Activated naive CD4-positive, alpha-beta T cell treated with anti-CD3 and anti-CD28 coated beads for 36 hours (primary cell): ENCODE measurements at regions of chr1 and their contacts with region 1.

Region 1: GRCh38 chr1:226407497-226408284 is at the start of gene PARP1:
- DNase-seq: peak; percentile 87
- H3K4me3 Mint-ChIP-seq: peak within 1 kb of the TSS; percentile 99
- H3K27ac Mint-ChIP-seq: peak within 1 kb of the TSS; percentile 98
- H3K4me1 Mint-ChIP-seq: peaks cover 39% of the 10 kb centered on the region
- H3K27me3 Mint-ChIP-seq: no peaks in the 10 kb centered on the region
- total RNA-seq, gene PARP1: 265 to 273 TPM

Region 2: GRCh38 chr1:225428068-225428880 is 979.4 kb before region 1 on chr1:
- CTCF ChIA-PET with region 1: no interaction called
- intact Hi-C with region 1: loop called (anchors 2 kb)
- DNase-seq: peak; percentile 94
- H3K4me3 Mint-ChIP-seq: peak overlapping the region; percentile 85
- H3K27ac Mint-ChIP-seq: peak overlapping the region; percentile 96
- H3K4me1 Mint-ChIP-seq: peaks cover 43% of the 10 kb centered on the region
- H3K27me3 Mint-ChIP-seq: no peaks in the 10 kb centered on the region

Region 3: GRCh38 chr1:225453797-225454648 is 953.7 kb before region 1 on chr1:
- CTCF ChIA-PET with region 1: no interaction called
- intact Hi-C with region 1: no loop called
- DNase-seq: peak; percentile 10
- H3K4me3 Mint-ChIP-seq: no peak overlapping the region
- H3K27ac Mint-ChIP-seq: peak overlapping the region; percentile 82
- H3K4me1 Mint-ChIP-seq: peaks cover 30% of the 10 kb centered on the region
- H3K27me3 Mint-ChIP-seq: no peaks in the 10 kb centered on the region

Region 4: GRCh38 chr1:226186124-226187018 is 221.3 kb before region 1 on chr1 and contains the start of gene ACBD3:
- CTCF ChIA-PET with region 1: no interaction called
- intact Hi-C with region 1: loop called (anchors 1 kb)
- DNase-seq: peak; percentile 91
- H3K4me3 Mint-ChIP-seq: peak within 1 kb of the TSS; percentile 89
- H3K27ac Mint-ChIP-seq: peak within 1 kb of the TSS; percentile 87
- H3K4me1 Mint-ChIP-seq: peaks cover 34% of the 10 kb centered on the region
- H3K27me3 Mint-ChIP-seq: no peaks in the 10 kb centered on the region
- total RNA-seq, gene ACBD3: 15.0 to 15.7 TPM

Region 5: GRCh38 chr1:226209307-226210059 is 198.2 kb before region 1 on chr1:
- CTCF ChIA-PET with region 1: no interaction called
- intact Hi-C with region 1: no loop called
- DNase-seq: no peak
- H3K4me3 Mint-ChIP-seq: no peak overlapping the region
- H3K27ac Mint-ChIP-seq: no peak overlapping the region
- H3K4me1 Mint-ChIP-seq: no peaks in the 10 kb centered on the region
- H3K27me3 Mint-ChIP-seq: no peaks in the 10 kb centered on the region

Region 6: GRCh38 chr1:226308723-226309315 is 98.9 kb before region 1 on chr1 and contains the start of gene LIN9:
- CTCF ChIA-PET with region 1: interaction called, 13 read pairs
- intact Hi-C with region 1: loop called (anchors 1 kb)
- DNase-seq: peak; percentile 96
- H3K4me3 Mint-ChIP-seq: peak within 1 kb of the TSS; percentile 91
- H3K27ac Mint-ChIP-seq: peak within 1 kb of the TSS; percentile 82
- H3K4me1 Mint-ChIP-seq: peaks cover 16% of the 10 kb centered on the region
- H3K27me3 Mint-ChIP-seq: peaks cover 16% of the 10 kb centered on the region
- total RNA-seq, gene LIN9: 7.7 to 9.5 TPM

Region 7: GRCh38 chr1:226444901-226445300 is 37.2 kb after region 1 on chr1:
- CTCF ChIA-PET with region 1: interaction called, 3 read pairs
- intact Hi-C with region 1: loop called (anchors 1 kb)
- DNase-seq: peak; percentile 80
- H3K4me3 Mint-ChIP-seq: no peak overlapping the region
- H3K27ac Mint-ChIP-seq: peak overlapping the region; percentile 47
- H3K4me1 Mint-ChIP-seq: peaks cover 31% of the 10 kb centered on the region
- H3K27me3 Mint-ChIP-seq: no peaks in the 10 kb centered on the region